ENCODE measurements at regions of chr21 and their contacts with region 1.

Region 1: GRCh38 chr21:45596704-45597318 is 46.7 kb upstream of the PCBP3 start:
- DNase-seq: peak; percentile 62 to 95 (median 80)
- ATAC-seq: peak; percentile 84 to 96 (median 94)
- H3K4me3 ChIP-seq: no peak overlapping the region
- H3K27ac ChIP-seq: no peak overlapping the region
- H3K4me1 ChIP-seq: peaks cover 0 to 10% (median 0%) of the 10 kb centered on the region in 3 donors
- H3K27me3 ChIP-seq: no peaks in the 10 kb centered on the region
- CTCF ChIP-seq: peak; percentile 72 to 85 (median 82)

Region 2: DNA sequence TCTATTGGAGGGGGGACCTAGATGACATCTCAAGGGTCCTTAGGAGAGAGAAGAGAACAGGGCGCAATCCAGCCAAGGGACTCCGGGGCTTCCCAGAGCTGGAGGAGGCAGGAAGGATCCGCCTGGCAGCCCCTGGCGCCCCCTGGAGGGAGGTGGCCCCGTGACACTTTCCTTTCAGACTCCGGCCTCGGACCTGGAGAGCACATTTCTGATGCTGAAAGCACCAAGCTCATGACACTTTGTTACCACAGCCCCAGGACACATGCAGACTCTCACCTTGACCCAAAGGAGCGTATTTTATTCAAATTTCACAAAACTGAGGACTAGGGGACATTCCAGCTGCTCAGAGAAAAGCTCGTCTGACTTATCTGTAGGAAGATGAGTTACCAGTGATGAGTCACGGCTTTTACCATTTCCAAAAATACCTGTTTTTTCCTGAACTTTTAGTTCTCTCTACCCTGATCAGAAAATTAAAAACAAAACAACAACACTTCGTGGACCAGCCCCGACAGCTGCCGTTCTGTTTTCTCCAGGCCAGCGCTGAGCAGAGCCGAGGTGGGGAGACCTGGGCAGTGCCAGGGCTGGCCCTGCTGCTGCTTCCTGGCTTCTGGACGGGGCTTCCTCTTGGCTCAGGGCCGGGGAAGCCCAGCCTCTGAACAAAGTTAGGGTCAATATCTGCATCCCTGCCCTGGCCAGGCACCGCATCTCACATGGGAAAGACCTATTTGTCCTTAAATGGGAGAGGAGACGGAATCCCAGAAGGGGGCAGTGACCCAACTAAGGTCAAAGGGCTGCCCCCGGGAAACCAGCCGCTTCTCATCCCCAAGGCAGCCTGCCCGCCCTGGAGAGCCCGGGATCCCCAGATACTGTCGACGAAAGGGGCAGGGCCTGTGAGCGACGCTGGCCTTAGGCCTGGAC is 287.5 kb before region 1 on chr21:
- intact Hi-C with region 1: no loop called
- DNase-seq: peak in 4 of 6 donors; percentile 62 to 80 (median 65)
- ATAC-seq: peak in 3 of 4 donors; percentile 23 to 55 (median 49)
- H3K4me3 ChIP-seq: no peak overlapping the region
- H3K27ac ChIP-seq: peak overlapping the region; percentile 26 to 64 (median 41)
- H3K4me1 ChIP-seq: peaks cover 3 to 7% (median 4%) of the 10 kb centered on the region in 3 donors
- H3K27me3 ChIP-seq: peaks cover 0 to 4% (median 0%) of the 10 kb centered on the region in 4 donors
- CTCF ChIP-seq: peak; percentile 12 to 32 (median 22)

Region 3: GRCh38 chr21:45554477-45555175 is 42.2 kb before region 1 on chr21:
- intact Hi-C with region 1: loop called in 2 of 3 experiments (anchors 5 kb)
- DNase-seq: peak; percentile 78 to 99 (median 87)
- ATAC-seq: peak; percentile 71 to 82 (median 76)
- H3K4me3 ChIP-seq: peak overlapping the region; percentile 2 to 50 (median 42)
- H3K27ac ChIP-seq: peak overlapping the region in 3 of 4 donors; percentile 28 to 81 (median 45)
- H3K4me1 ChIP-seq: no peaks in the 10 kb centered on the region
- H3K27me3 ChIP-seq: no peaks in the 10 kb centered on the region
- CTCF ChIP-seq: peak; percentile 71 to 80 (median 78)

Measured in pancreas (tissue), 10 donors.